CD4-positive, alpha-beta T cell (primary cell): ENCODE measurements at regions of chrX and their contacts with region 1.

Region 1: GRCh38 chrX:38768079-38768478 is 33.2 kb upstream of the MID1IP1 start:
- DNase-seq: peak in 4 of 14 experiments; percentile 11 to 52 (median 44)
- ATAC-seq: peak; percentile 32
- H3K4me3 ChIP-seq: no peak overlapping the region
- H3K4me3 Mint-ChIP-seq: no peak overlapping the region
- H3K27ac ChIP-seq: no peak overlapping the region
- H3K27ac Mint-ChIP-seq: no peak overlapping the region
- H3K4me1 ChIP-seq: no peaks in the 10 kb centered on the region
- H3K4me1 Mint-ChIP-seq: no peaks in the 10 kb centered on the region
- H3K27me3 ChIP-seq: no peaks in the 10 kb centered on the region
- H3K27me3 Mint-ChIP-seq: no peaks in the 10 kb centered on the region
- CTCF ChIP-seq: peak; percentile 57

Region 2: GRCh38 chrX:38985375-38985774 is 217.3 kb after region 1 on chrX:
- CTCF ChIA-PET with region 1: interaction called, 8 read pairs
- POLR2A ChIA-PET with region 1: no interaction called
- intact Hi-C with region 1: loop called (anchors 1 kb)
- DNase-seq: peak in 4 of 14 experiments; percentile 3 to 47 (median 41)
- ATAC-seq: no peak
- H3K4me3 ChIP-seq: no peak overlapping the region
- H3K4me3 Mint-ChIP-seq: no peak overlapping the region
- H3K27ac ChIP-seq: no peak overlapping the region
- H3K27ac Mint-ChIP-seq: no peak overlapping the region
- H3K4me1 ChIP-seq: no peaks in the 10 kb centered on the region
- H3K4me1 Mint-ChIP-seq: peaks cover 6% of the 10 kb centered on the region
- H3K27me3 ChIP-seq: no peaks in the 10 kb centered on the region
- H3K27me3 Mint-ChIP-seq: no peaks in the 10 kb centered on the region
- CTCF ChIP-seq: peak; percentile 42

Region 3: GRCh38 chrX:39149761-39150160 is 381.7 kb after region 1 on chrX:
- CTCF ChIA-PET with region 1: interaction called, 6 read pairs
- POLR2A ChIA-PET with region 1: interaction called, 4 read pairs
- intact Hi-C with region 1: loop called (anchors 1 to 2 kb)
- DNase-seq: peak; percentile 39 to 74 (median 50)
- ATAC-seq: no peak
- H3K4me3 ChIP-seq: no peak overlapping the region
- H3K4me3 Mint-ChIP-seq: no peak overlapping the region
- H3K27ac ChIP-seq: no peak overlapping the region
- H3K27ac Mint-ChIP-seq: no peak overlapping the region
- H3K4me1 ChIP-seq: no peaks in the 10 kb centered on the region
- H3K4me1 Mint-ChIP-seq: peaks cover 3% of the 10 kb centered on the region
- H3K27me3 ChIP-seq: no peaks in the 10 kb centered on the region
- H3K27me3 Mint-ChIP-seq: no peaks in the 10 kb centered on the region
- CTCF ChIP-seq: peak; percentile 66